ENCODE measurements at regions of chr11 and their contacts with region 1.

Region 1: GRCh38 chr11:62855571-62856332 is 16.4 kb upstream of the WDR74 start:
- DNase-seq: peak; percentile 98
- H3K4me3 Mint-ChIP-seq: peak overlapping the region; percentile 99
- H3K27ac Mint-ChIP-seq: peak overlapping the region; percentile 96
- H3K4me1 Mint-ChIP-seq: peaks cover 53% of the 10 kb centered on the region
- H3K27me3 Mint-ChIP-seq: no peaks in the 10 kb centered on the region

Region 2: GRCh38 chr11:62671575-62672389 is 184.0 kb before region 1 on chr11 and contains the starts of genes LBHD1 and UQCC3:
- CTCF ChIA-PET with region 1: no interaction called
- intact Hi-C with region 1: loop called (anchors 5 kb)
- DNase-seq: peak; percentile 78
- H3K4me3 Mint-ChIP-seq: peak within 1 kb of the TSS; percentile 99
- H3K27ac Mint-ChIP-seq: peak within 1 kb of the TSS; percentile 98
- H3K4me1 Mint-ChIP-seq: peaks cover 59% of the 10 kb centered on the region
- H3K27me3 Mint-ChIP-seq: no peaks in the 10 kb centered on the region
- total RNA-seq, gene LBHD1: 4.4 to 6.1 TPM
- total RNA-seq, gene UQCC3: 6.0 to 6.4 TPM

Region 3: DNA sequence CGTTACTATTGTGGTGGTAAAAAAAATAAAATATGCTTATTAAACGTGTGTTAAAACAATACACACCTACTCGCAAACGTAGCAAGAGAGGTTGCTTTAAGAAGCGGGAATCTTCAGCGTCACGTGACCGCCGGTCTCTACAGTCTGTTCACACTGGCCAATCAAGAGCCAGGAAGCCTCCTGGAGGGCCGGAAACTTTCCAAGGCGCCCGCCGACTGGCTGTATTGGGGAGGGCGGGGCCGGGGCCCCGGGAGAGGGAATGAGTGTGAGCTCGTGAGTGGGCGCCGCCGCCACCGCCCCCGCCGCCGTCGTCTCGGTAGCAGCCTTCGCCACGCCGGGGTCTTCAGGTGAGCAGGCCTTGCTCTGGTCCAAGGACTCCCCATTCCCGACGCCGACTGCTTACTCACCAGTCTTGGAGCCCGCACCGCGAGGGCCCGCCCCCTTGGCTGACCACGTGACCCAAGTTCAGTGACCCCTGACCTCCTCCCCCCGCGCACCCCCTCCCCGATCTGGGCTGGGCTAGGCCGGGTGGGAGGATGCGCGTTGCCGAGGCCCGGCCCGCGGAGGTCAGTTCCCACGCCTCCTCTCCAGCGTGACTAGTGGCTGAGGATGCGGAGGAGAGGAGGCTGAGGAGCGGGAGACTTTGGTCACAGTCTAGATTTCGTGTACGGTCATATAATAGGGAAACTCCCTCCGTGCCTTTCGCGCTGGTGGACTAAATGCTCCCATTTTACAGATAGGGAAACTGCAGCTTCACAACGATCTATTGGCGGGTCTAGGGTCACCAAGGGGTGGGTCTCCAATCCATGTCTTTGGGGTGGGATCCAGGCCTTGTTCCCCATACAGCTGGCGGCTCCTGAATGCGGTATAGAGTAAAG is 84.4 kb before region 1 on chr11 and contains the start of gene TAF6L:
- CTCF ChIA-PET with region 1: interaction called, 5 read pairs
- intact Hi-C with region 1: loop called (anchors 1 kb)
- DNase-seq: peak; percentile 95
- H3K4me3 Mint-ChIP-seq: peak within 1 kb of the TSS; percentile 80
- H3K27ac Mint-ChIP-seq: peak within 1 kb of the TSS; percentile 91
- H3K4me1 Mint-ChIP-seq: peaks cover 25% of the 10 kb centered on the region
- H3K27me3 Mint-ChIP-seq: no peaks in the 10 kb centered on the region
- total RNA-seq, gene TAF6L: 8.9 to 10.5 TPM

Region 4: DNA sequence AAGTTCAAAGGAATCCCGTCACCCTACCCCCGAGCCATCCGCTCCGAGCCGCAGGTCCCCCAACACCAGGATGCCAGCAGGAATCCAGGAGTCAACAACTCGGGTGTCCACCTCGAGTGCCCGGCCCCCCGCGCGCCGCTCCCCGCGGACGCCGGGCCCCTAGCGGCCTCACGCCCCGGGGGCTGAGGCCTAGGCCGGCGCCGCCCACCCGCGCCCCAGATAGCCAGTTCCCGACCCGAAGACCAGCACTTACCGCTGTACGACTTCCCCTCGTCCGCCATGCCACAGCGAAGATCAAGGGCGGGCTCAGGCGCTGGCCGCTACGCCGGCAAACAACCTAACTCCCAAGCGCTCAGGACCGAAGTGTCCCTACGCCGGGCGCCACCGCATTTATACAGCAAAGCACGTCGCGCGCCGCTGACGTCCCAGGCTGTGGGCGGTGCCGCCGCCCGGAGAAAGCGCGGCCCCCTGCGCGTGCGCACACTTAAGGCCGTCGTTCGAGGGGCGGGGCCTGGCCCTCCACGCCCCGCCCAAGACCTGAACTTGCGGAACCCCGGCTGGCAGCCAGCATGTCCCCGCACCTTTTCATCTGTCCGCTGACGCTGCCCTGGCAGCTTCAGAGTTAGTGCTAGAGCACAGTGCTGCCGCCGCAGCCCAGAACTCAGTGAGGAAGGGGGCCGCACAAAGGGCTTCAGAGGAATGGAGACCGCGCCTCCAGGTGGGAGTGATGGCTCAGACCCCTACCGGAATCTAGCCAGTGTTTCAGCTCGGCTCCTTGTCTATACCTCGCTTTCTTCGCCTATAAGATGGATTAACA is 50.5 kb before region 1 on chr11 and contains the start of gene NXF1:
- CTCF ChIA-PET with region 1: interaction called, 3 read pairs
- intact Hi-C with region 1: loop called (anchors 1 kb)
- DNase-seq: peak; percentile 93
- H3K4me3 Mint-ChIP-seq: peak within 1 kb of the TSS; percentile 95
- H3K27ac Mint-ChIP-seq: peak within 1 kb of the TSS; percentile 94
- H3K4me1 Mint-ChIP-seq: peaks cover 28% of the 10 kb centered on the region
- H3K27me3 Mint-ChIP-seq: no peaks in the 10 kb centered on the region
- total RNA-seq, gene NXF1: 44.6 to 46.0 TPM